Heart left ventricle (tissue), 16 donors: ENCODE measurements at regions of chr5 and their contacts with region 1.

Region 1: DNA sequence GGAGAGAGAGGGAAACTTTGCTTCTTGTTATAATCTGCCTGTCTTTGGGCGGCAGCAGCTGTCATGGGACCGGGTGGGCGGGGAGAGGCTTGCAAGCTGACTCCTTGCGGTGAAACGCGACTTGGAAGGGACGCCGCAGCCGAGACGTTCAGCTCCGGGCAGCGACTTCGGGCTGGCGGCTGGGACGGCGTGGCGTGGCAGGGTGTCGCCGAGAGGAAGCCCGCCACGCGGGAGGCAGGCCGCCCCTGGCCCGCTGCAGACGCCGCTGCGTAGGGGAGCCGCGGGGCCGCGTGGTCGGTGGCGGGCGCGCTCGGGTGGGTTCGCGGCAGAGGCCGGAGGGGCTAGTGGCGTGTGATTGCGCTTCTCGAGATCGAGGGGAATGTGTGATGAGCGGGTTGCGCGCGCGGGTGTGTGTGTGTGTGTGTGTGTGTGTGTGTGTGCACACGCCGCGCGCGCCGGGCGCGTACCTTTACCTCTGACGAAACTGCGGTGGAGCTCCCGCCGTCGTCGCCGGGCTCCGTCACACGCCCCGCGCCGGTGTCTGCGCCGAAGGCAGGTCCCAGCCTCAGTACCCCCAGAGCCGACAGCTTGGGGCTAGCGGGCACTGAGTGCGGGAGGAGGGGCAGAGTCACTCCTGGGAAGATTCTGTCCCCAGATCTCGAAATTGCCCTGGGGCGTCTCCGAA is 1.7 kb downstream of the PPARGC1B start:
- DNase-seq: peak; percentile 90 to 93 (median 91)
- ATAC-seq: peak; percentile 32 to 76 (median 71)
- H3K4me3 ChIP-seq: peak overlapping the region; percentile 65 to 99 (median 90)
- H3K27ac ChIP-seq: peak overlapping the region; percentile 83 to 98 (median 94)
- H3K4me1 ChIP-seq: peaks cover 0 to 40% (median 8%) of the 10 kb centered on the region in 12 donors
- H3K27me3 ChIP-seq: no peaks in the 10 kb centered on the region
- CTCF ChIP-seq: peak in 4 of 12 donors; percentile 15 to 32 (median 22)
- POLR2A ChIP-seq: peak; percentile 23 to 80

Region 2: GRCh38 chr5:149357370-149358293 is 374.1 kb before region 1 on chr5 and contains the start of gene PCYOX1L:
- intact Hi-C with region 1: no loop called
- DNase-seq: peak; percentile 97 to 98 (median 97)
- ATAC-seq: peak; percentile 98 to 100 (median 100)
- H3K4me3 ChIP-seq: peak within 1 kb of the TSS; percentile 54 to 97 (median 77)
- H3K27ac ChIP-seq: peak within 1 kb of the TSS in 11 of 12 donors; percentile 31 to 84 (median 65)
- H3K4me1 ChIP-seq: peaks cover 0 to 30% (median 11%) of the 10 kb centered on the region in 12 donors
- H3K27me3 ChIP-seq: no peaks in the 10 kb centered on the region
- CTCF ChIP-seq: peak in 1 of 12 donors; percentile 7
- POLR2A ChIP-seq: peak in 1 of 2 donors; percentile 50
- total RNA-seq, gene PCYOX1L: 2.3 to 6.8 (median 3.7) TPM

Region 3: GRCh38 chr5:149526845-149527580 is 204.8 kb before region 1 on chr5:
- intact Hi-C with region 1: no loop called
- DNase-seq: no peak
- ATAC-seq: peak in 2 of 4 donors; percentile 18 to 41
- H3K4me3 ChIP-seq: peak overlapping the region in 1 of 12 donors; percentile 3
- H3K27ac ChIP-seq: peak overlapping the region in 11 of 12 donors; percentile 8 to 69 (median 42)
- H3K4me1 ChIP-seq: peaks cover 27 to 97% (median 80%) of the 10 kb centered on the region in 12 donors
- H3K27me3 ChIP-seq: no peaks in the 10 kb centered on the region
- CTCF ChIP-seq: no peak
- POLR2A ChIP-seq: no peak

Region 4: DNA sequence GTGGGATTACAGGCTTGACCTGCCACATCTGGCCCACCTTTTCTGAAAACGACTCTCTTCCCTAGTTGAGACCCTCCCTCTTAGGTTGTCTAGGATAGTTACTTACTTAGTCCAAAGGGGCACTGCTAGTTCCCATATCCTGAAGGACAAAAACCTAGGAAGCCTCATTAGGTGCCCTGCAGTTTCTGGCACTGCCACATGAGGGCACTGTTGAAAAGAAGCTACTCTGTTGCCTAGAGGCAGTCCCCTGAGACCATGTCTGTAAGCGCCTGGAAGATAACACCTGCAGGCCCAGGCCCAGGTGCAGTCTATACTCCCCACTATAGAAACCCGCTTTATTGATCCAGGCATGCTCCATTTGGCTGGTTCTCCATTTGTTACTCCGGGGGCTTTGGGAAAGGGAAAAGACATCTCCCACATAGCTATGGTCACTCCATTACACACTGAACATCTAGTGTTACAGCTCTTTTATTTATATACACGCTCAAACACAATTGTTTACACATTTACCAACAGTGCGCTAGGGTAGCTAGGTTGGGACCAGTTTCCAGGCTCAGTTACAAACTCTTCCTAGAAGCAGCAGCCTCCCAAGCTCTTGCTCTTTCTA is 75.1 kb before region 1 on chr5:
- intact Hi-C with region 1: loop called in 7 of 10 experiments (anchors 5 kb)
- DNase-seq: peak in 3 of 5 donors; percentile 49 to 61 (median 49)
- ATAC-seq: peak in 3 of 4 donors; percentile 33 to 51 (median 47)
- H3K4me3 ChIP-seq: no peak overlapping the region
- H3K27ac ChIP-seq: peak overlapping the region in 7 of 12 donors; percentile 33 to 84 (median 80)
- H3K4me1 ChIP-seq: peaks cover 0 to 32% (median 6%) of the 10 kb centered on the region in 12 donors
- H3K27me3 ChIP-seq: no peaks in the 10 kb centered on the region
- CTCF ChIP-seq: peak; percentile 60 to 77 (median 68)
- POLR2A ChIP-seq: no peak

Region 5: DNA sequence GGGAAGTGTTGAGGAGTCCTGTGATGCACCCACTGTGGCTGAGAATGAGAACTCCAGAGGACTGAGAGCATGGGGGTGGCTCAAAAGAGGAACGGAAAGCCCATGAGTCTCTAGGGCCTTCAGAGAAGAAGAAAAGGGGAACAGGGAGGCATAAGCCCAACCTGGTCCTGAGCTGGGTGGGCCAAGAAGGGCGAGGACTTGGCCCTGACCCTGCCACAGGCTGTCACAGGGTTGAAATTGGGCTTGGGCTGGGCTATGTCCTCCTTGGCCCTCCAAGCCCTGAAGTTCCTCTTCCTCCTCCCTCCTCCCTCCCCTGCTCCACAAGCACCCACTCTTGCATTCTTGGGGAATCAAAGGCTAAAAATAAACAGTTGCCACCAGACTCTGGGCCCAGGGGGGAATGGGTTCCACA is 51.0 kb before region 1 on chr5:
- intact Hi-C with region 1: loop called in 2 of 10 experiments (anchors 5 kb)
- DNase-seq: peak; percentile 56 to 80 (median 70)
- ATAC-seq: peak; percentile 72 to 87 (median 80)
- H3K4me3 ChIP-seq: no peak overlapping the region
- H3K27ac ChIP-seq: peak overlapping the region; percentile 72 to 99 (median 88)
- H3K4me1 ChIP-seq: peaks cover 0 to 73% (median 33%) of the 10 kb centered on the region in 12 donors
- H3K27me3 ChIP-seq: no peaks in the 10 kb centered on the region
- CTCF ChIP-seq: no peak
- POLR2A ChIP-seq: no peak

Region 6: DNA sequence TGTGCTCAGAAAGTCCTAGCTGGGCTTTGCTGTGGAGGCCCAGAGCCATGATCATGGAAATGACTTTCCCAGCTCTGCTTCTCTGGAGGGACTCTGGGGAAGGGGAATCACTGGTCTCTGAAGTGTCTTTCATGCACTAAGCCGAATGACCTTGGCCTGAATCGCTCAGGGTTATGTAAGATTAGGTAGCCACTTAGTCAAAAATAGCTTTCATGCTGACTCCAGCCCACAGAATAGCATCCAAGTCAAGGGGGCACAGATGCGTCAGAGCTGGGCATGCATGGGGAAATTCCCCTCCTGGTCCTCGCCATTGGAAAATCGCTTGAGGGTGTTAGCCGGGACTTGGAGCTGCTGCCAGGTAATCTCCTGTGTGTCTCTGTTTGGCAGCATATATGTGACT is 37.8 kb before region 1 on chr5:
- intact Hi-C with region 1: loop called in 3 of 10 experiments (anchors 2 to 5 kb)
- DNase-seq: peak; percentile 67 to 87 (median 78)
- ATAC-seq: peak; percentile 93 to 96 (median 96)
- H3K4me3 ChIP-seq: peak overlapping the region in 5 of 12 donors; percentile 9 to 28 (median 19)
- H3K27ac ChIP-seq: peak overlapping the region; percentile 22 to 94 (median 82)
- H3K4me1 ChIP-seq: peaks cover 0 to 27% (median 8%) of the 10 kb centered on the region in 12 donors
- H3K27me3 ChIP-seq: no peaks in the 10 kb centered on the region
- CTCF ChIP-seq: no peak
- POLR2A ChIP-seq: no peak

Region 7: DNA sequence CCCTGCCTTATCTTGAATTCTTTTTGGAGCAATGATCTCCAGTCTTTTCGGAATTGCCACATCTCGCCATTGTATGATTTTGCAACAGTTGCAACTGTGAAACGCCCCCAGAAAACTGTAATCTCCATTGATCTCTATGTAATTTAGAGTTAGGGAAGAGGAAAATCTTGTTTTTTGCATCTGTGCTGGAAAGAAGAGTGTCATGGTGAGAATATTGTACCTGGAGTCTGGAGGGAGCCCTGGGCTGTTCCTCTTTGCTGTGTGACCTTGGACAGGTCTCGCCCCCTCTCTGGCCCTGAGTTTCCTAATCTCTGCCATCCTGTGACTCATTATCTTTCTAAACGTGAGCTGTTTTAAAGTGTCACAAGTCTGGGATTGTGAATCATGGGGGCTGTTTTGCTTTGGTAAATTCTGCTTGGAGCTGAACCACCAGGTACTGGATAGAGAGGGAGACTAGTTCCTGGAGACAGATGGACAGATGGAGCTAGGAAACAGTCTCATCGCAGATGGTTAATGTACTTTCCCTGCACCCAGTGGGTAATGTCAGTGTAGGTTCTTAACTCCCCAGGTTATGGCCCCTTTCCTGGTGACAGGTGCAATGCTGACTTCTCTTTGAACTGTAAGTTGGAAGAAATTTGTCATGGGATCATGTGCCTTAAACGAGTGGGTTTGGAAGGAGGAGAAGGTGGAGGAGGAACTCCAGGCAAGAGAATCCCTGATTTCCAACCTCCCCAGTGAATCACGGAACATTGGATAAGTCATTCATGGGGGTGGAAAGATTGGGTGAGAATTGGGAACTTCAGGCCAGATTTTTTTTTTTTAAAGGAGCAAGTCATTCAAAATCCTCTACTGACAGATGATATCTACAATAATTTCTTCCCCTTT is 17.9 kb after region 1 on chr5:
- intact Hi-C with region 1: loop called in 1 of 10 experiments (anchors 1 kb)
- DNase-seq: peak in 1 of 5 donors; percentile 4
- ATAC-seq: no peak
- H3K4me3 ChIP-seq: no peak overlapping the region
- H3K27ac ChIP-seq: peak overlapping the region in 7 of 12 donors; percentile 14 to 61 (median 33)
- H3K4me1 ChIP-seq: peaks cover 0 to 70% (median 33%) of the 10 kb centered on the region in 12 donors
- H3K27me3 ChIP-seq: no peaks in the 10 kb centered on the region
- CTCF ChIP-seq: no peak
- POLR2A ChIP-seq: no peak

Region 8: DNA sequence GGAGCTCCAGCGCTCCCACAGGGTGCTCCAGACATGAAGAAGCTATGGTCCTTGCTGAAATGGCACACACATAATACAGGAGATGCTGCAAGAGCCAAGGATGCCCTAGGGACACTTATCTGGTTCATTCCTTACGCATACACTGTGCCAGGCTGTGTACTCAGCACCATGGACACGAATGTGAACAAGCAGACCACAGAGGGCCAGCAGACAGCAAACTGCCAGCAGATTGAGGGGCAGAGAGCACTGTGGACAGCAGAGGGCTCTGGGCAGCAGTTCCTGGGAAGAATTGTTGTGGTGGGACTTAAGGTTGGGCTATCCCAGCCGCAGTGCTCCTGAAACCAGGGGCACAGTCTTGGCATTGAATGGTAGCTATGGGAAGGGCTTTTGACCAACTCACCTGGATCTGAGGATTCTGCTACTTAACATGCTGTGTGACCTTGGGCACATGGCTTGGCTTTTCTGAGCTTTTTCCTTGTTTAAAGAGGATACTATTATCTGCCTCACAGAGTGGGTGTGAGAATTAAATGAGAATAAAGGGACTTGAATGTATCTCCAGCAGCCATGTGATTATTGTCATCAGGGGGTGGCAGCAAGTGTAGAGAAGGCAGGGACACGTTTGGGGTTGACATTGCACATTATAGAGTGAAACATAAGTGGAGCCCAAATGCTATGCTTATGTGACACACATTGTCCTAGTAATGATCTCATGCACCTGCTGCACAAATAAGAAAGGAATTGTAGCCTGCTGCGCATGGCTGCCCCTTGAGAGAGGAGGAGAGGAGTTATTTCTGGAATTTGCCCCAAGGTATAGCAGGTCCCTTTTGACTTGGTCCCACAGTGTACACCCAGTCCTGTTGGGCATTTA is 28.4 kb after region 1 on chr5:
- intact Hi-C with region 1: no loop called
- DNase-seq: peak in 1 of 5 donors; percentile 61
- ATAC-seq: peak; percentile 59 to 89 (median 72)
- H3K4me3 ChIP-seq: no peak overlapping the region
- H3K27ac ChIP-seq: peak overlapping the region in 6 of 12 donors; percentile 18 to 60 (median 40)
- H3K4me1 ChIP-seq: peaks cover 0 to 85% (median 26%) of the 10 kb centered on the region in 12 donors
- H3K27me3 ChIP-seq: no peaks in the 10 kb centered on the region
- CTCF ChIP-seq: peak in 8 of 12 donors; percentile 17 to 51 (median 36)
- POLR2A ChIP-seq: no peak

Region 9: DNA sequence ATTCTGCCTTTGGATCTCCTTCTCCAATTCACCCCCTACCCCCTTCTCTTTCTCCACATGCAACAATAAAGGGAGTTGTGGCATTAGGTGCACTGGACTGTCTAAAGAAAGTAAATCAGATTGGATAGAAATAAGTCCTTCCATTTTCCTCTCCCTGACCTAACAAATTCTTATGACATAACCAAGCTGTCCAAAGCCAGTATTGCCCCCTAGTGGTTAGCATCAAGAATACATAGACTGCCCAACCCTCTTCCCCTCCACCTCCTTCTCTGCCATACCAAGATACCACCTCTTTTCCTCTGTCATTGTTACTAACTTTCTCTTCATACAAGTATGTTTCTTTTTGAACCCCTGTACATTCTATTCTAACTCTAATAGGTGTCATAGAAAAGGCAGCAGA is 44.0 kb after region 1 on chr5:
- intact Hi-C with region 1: loop called in 2 of 10 experiments (anchors 5 kb)
- DNase-seq: no peak
- ATAC-seq: no peak
- H3K4me3 ChIP-seq: no peak overlapping the region
- H3K27ac ChIP-seq: peak overlapping the region in 9 of 12 donors; percentile 55 to 87 (median 71)
- H3K4me1 ChIP-seq: peaks cover 9 to 96% (median 82%) of the 10 kb centered on the region in 12 donors
- H3K27me3 ChIP-seq: no peaks in the 10 kb centered on the region
- CTCF ChIP-seq: peak in 10 of 12 donors; percentile 24 to 51 (median 35)
- POLR2A ChIP-seq: no peak

Region 10: GRCh38 chr5:149809931-149810617 is 78.3 kb after region 1 on chr5:
- intact Hi-C with region 1: loop called in 1 of 10 experiments (anchors 5 kb)
- DNase-seq: no peak
- ATAC-seq: peak in 1 of 4 donors; percentile 2
- H3K4me3 ChIP-seq: no peak overlapping the region
- H3K27ac ChIP-seq: peak overlapping the region in 11 of 12 donors; percentile 30 to 87 (median 61)
- H3K4me1 ChIP-seq: peaks cover 7 to 93% (median 55%) of the 10 kb centered on the region in 12 donors
- H3K27me3 ChIP-seq: no peaks in the 10 kb centered on the region
- CTCF ChIP-seq: no peak
- POLR2A ChIP-seq: no peak

Region 11: GRCh38 chr5:150196514-150196913 is 464.7 kb after region 1 on chr5:
- intact Hi-C with region 1: no loop called
- DNase-seq: no peak
- ATAC-seq: no peak
- H3K4me3 ChIP-seq: no peak overlapping the region
- H3K27ac ChIP-seq: no peak overlapping the region
- H3K4me1 ChIP-seq: no peaks in the 10 kb centered on the region
- H3K27me3 ChIP-seq: peaks cover 0 to 4% (median 0%) of the 10 kb centered on the region in 9 donors
- CTCF ChIP-seq: no peak
- POLR2A ChIP-seq: no peak